Activated T-helper 1 cell treated with anti-CD3 and anti-CD28 coated beads, Interleukin-12 subunit alpha, Interleukin-12 subunit beta, Interleukin-2, Interleukin-4 antibody, amounts not matched to agents 30 ng/mL and 10 ng/mL and 1 ng/mL, durations not matched to agents 14 hours and 24 hours and 36 hours (primary cell): ENCODE measurements at regions of chr17 and their contacts with region 1.

Region 1: GRCh38 chr17:41439389-41439788 is 1.4 kb downstream of the KRT38 start:
- DNase-seq: no peak
- H3K4me3 Mint-ChIP-seq: no peak overlapping the region
- H3K27ac Mint-ChIP-seq: no peak overlapping the region
- H3K4me1 Mint-ChIP-seq: no peaks in the 10 kb centered on the region
- H3K27me3 Mint-ChIP-seq: peaks cover 5% of the 10 kb centered on the region

Region 2: DNA sequence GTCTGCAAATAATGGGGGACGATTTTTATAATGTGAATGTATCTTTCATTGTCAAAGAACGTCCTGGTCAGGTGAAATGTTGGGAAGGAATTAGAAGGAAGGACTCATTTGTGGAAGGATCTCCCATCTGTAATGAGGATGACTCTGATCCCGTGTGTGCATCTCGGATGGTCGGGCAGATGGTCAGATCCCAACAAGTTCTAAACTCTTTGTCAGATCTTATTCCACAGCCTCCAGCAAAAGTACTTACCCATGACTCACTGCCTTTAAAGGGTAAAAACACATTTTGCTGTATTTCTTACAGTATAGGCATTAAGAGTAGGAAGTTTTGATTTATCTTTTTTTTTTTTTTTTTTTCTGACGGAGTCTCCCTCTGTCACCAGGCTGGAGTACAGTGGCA is 340.9 kb before region 1 on chr17:
- intact Hi-C with region 1: no loop called
- DNase-seq: no peak
- H3K4me3 Mint-ChIP-seq: no peak overlapping the region
- H3K27ac Mint-ChIP-seq: no peak overlapping the region
- H3K4me1 Mint-ChIP-seq: no peaks in the 10 kb centered on the region
- H3K27me3 Mint-ChIP-seq: peaks cover 7% of the 10 kb centered on the region

Region 3: GRCh38 chr17:41421617-41422016 is 17.8 kb before region 1 on chr17:
- intact Hi-C with region 1: loop called (anchors 2 kb)
- DNase-seq: no peak
- H3K4me3 Mint-ChIP-seq: no peak overlapping the region
- H3K27ac Mint-ChIP-seq: no peak overlapping the region
- H3K4me1 Mint-ChIP-seq: no peaks in the 10 kb centered on the region
- H3K27me3 Mint-ChIP-seq: peaks cover 8% of the 10 kb centered on the region